Endothelial cell of umbilical vein (primary cell): ENCODE measurements at regions of chr19 and their contacts with region 1.

Region 1: GRCh38 chr19:18388100-18388959 is 2.4 kb downstream of the GDF15 start:
- DNase-seq: peak; percentile 73
- H3K4me3 ChIP-seq: peak overlapping the region; percentile 71 to 97 (median 94)
- H3K27ac ChIP-seq: no peak overlapping the region
- H3K4me1 ChIP-seq: peaks cover 21% of the 10 kb centered on the region
- H3K27me3 ChIP-seq: no peaks in the 10 kb centered on the region
- CTCF ChIP-seq: peak; percentile 97 to 99
- POLR2A ChIP-seq: peak; percentile 32

Region 2: DNA sequence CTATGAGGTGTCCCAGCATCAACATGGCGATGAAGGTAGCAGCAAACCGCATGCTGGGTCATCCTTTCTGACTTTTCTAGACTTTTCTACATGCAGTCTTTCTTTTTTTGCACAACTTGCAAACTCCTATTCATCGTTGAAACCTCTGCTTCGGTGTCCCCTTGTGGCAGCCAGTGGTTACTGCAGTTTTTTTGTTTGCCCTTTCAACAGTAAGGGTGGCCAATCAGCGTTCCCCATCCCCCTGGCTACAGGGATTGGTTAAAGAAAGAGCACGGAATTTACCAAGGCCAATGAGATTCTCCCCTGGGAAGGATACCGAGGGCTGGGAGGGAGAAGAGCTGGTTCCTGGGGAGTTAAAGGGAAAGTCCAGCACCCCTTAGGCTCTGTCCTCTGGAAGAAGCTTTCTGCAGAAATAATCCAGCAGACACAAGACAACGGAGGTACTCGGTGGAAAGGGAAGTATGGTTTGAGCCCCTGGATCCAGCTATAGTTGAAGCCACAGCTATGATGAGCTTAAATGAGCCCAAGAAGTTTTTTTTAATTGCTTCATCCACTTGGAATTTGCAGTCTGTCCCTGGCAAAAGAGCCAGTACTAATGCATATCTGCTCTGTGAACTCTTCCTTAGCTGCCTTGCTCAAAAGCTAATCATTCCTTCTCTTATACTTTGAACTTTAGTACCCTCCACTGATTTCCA is 59.8 kb before region 1 on chr19:
- CTCF ChIA-PET with region 1: interaction called, 7 read pairs
- POLR2A ChIA-PET with region 1: interaction called, 10 read pairs
- dilution Hi-C with region 1: no loop called
- intact Hi-C with region 1: no loop called
- DNase-seq: peak; percentile 97
- H3K4me3 ChIP-seq: peak overlapping the region in 2 of 3 experiments; percentile 4 to 16
- H3K27ac ChIP-seq: peak overlapping the region; percentile 13
- H3K4me1 ChIP-seq: peaks cover 8% of the 10 kb centered on the region
- H3K27me3 ChIP-seq: peaks cover 0 to 2% of the 10 kb centered on the region in 2 experiments
- CTCF ChIP-seq: peak; percentile 84 to 97
- POLR2A ChIP-seq: no peak

Region 3: DNA sequence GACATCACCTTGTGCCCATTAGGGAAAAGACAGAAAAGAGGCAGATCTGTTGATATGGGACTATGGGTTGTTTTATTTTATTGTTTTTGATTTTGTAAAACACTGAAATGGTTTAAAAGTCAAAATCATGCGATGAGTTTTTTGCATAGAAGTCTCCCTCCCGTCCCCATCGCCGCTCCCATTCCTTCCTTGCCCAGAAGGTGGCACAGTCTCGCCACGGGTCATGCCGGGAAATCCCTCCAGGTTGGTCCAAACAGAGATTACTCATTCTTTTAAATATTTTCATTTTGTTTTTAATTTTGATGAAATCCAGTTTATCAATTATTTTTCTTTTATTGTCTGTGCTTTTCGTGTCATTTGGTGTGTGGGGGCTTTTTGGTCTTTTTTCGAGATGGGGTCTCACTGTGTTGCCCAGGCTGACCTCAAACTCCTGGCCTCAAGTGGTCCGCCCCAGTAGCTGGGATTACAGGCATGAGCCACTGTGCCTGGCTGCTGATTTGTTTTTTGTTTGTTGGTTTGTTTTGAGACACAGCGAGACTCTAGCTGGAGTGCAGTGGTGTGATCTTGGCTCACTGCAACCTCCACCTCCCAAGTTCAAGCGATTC is 38.7 kb before region 1 on chr19:
- CTCF ChIA-PET with region 1: interaction called, 115 read pairs
- POLR2A ChIA-PET with region 1: interaction called, 9 read pairs
- dilution Hi-C with region 1: no loop called
- intact Hi-C with region 1: loop called (anchors 1 kb)
- DNase-seq: peak; percentile 67
- H3K4me3 ChIP-seq: no peak overlapping the region
- H3K27ac ChIP-seq: no peak overlapping the region
- H3K4me1 ChIP-seq: no peaks in the 10 kb centered on the region
- H3K27me3 ChIP-seq: no peaks in the 10 kb centered on the region
- CTCF ChIP-seq: peak; percentile 80 to 86
- POLR2A ChIP-seq: no peak

Region 4: DNA sequence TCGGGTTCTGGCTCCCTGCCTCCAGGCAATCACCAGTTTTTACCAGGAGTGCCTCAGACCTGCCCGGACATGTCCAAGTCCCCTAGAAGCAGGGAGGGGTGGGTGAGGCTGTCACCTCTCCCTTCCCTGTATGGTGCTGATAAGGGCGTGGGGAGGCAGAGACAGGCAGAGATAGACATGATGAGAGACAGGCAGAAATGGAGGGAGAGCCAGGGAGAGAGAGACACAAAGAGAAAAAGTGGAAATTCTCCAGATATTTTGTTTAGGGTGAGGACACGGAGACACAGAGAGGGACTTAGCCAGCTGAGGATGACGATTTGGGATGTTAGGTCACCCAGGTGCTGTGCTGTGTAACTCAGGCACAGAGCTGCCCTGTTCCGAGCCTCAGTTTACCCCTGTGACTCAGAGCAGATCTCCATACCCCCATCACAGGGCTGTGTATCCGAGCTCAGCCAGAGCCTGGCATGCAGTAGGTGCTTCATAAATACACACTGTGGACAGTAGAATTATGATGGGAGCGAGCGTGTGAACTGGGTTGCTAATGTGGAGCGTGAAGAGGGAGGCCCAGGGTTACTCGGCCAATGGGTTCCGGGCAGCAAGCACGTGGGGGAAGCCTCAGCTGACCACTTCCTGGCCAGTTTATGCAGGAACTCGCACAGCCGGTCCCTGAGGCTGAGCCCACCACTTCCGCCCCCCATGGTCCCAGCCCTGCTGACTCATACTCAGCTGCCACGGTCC is 14.3 kb before region 1 on chr19:
- CTCF ChIA-PET with region 1: interaction called, 19 read pairs
- POLR2A ChIA-PET with region 1: interaction called, 19 read pairs
- dilution Hi-C with region 1: no loop called
- intact Hi-C with region 1: loop called (anchors 1 kb)
- DNase-seq: peak; percentile 97
- H3K4me3 ChIP-seq: no peak overlapping the region
- H3K27ac ChIP-seq: peak overlapping the region; percentile 92
- H3K4me1 ChIP-seq: peaks cover 17% of the 10 kb centered on the region
- H3K27me3 ChIP-seq: no peaks in the 10 kb centered on the region
- CTCF ChIP-seq: no peak
- POLR2A ChIP-seq: peak; percentile 73

Region 5: DNA sequence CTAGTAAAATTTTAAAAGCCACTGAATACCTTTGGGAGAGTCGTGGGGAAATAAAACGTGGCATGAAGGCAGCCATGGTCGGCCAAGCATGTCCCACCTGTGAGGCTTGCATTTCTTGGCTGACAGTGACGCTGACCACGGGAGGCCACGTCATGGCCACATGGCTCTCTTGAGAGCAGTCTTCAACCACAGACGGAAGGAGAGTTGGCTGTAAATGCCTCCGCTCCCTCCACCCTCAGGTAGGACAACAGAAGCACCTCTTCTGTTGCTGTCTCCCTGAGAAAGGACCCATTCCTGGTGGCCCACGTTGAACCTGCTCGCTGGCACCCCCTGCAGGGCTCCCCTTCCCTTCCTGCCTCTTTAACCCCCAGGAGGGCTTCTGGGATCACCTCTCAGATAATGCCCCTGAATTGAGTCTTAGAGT is 19.7 kb after region 1 on chr19:
- CTCF ChIA-PET with region 1: interaction called, 64 read pairs
- POLR2A ChIA-PET with region 1: interaction called, 8 read pairs
- dilution Hi-C with region 1: no loop called
- intact Hi-C with region 1: loop called (anchors 1 kb)
- DNase-seq: no peak
- H3K4me3 ChIP-seq: no peak overlapping the region
- H3K27ac ChIP-seq: no peak overlapping the region
- H3K4me1 ChIP-seq: no peaks in the 10 kb centered on the region
- H3K27me3 ChIP-seq: no peaks in the 10 kb centered on the region
- CTCF ChIP-seq: peak; percentile 55 to 69
- POLR2A ChIP-seq: no peak

Region 6: DNA sequence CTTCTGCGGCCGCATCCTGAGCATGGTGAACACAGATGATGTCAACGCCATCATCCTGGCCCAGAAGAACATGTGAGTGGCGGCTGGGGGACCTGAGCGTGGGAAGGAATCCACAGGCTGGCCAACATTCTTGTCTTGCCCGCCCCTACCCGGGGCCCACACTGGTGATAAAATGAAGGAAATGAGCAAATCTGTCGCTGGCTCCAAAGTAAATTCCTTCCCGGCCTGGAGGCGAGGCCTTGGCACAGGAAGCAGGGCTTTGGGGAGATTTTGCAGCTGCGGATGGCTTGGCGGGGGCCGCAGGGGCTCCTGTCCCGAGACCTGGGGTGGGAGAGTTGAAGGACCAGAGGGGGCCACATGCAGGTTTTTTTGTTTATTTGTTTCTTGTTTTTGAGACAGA is 173.8 kb after region 1 on chr19:
- CTCF ChIA-PET with region 1: no interaction called
- POLR2A ChIA-PET with region 1: no interaction called
- dilution Hi-C with region 1: no loop called
- intact Hi-C with region 1: no loop called
- DNase-seq: peak; percentile 91
- H3K4me3 ChIP-seq: no peak overlapping the region
- H3K27ac ChIP-seq: peak overlapping the region; percentile 91
- H3K4me1 ChIP-seq: peaks cover 30% of the 10 kb centered on the region
- H3K27me3 ChIP-seq: no peaks in the 10 kb centered on the region
- CTCF ChIP-seq: no peak
- POLR2A ChIP-seq: no peak